ENCODE measurements at regions of chr17 and their contacts with region 1.

Region 1: DNA sequence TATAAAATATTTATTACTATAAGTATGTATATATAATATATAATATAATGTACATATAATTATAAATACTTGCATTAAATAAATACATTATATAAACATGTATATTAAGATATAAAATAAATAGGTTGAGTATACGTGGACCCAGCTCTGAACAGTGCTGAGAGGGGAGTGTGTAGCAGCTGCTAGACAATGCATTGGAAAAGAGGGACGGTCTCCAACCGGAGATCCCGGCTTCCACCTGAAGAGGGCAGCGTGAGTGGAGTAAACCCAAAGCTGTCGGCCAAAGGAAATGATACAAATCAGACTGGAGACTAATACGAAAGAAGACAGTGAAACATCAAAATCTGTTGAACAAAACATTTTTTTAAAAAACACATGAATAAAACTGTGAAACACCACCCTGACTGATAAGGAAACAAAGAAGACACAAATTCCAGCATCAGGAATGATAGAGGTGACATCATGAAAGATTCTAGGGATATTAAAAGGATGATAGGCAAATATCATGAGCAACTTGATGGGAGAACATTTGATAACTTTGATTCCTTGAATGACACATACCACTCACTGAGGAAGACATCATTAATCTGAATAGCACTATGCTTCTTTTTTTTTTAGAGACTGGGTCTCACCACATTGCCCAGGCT is 125.4 kb upstream of the CHMP6 start:
- DNase-seq: peak; percentile 34 to 73 (median 63)
- ATAC-seq: peak; percentile 65
- H3K4me3 ChIP-seq: no peak overlapping the region
- H3K4me3 Mint-ChIP-seq: no peak overlapping the region
- H3K27ac ChIP-seq: no peak overlapping the region
- H3K27ac Mint-ChIP-seq: peak overlapping the region; percentile 73
- H3K4me1 ChIP-seq: peaks cover 27% of the 10 kb centered on the region
- H3K4me1 Mint-ChIP-seq: peaks cover 48% of the 10 kb centered on the region
- H3K27me3 ChIP-seq: no peaks in the 10 kb centered on the region
- H3K27me3 Mint-ChIP-seq: no peaks in the 10 kb centered on the region
- CTCF ChIP-seq: peak; percentile 72

Region 2: DNA sequence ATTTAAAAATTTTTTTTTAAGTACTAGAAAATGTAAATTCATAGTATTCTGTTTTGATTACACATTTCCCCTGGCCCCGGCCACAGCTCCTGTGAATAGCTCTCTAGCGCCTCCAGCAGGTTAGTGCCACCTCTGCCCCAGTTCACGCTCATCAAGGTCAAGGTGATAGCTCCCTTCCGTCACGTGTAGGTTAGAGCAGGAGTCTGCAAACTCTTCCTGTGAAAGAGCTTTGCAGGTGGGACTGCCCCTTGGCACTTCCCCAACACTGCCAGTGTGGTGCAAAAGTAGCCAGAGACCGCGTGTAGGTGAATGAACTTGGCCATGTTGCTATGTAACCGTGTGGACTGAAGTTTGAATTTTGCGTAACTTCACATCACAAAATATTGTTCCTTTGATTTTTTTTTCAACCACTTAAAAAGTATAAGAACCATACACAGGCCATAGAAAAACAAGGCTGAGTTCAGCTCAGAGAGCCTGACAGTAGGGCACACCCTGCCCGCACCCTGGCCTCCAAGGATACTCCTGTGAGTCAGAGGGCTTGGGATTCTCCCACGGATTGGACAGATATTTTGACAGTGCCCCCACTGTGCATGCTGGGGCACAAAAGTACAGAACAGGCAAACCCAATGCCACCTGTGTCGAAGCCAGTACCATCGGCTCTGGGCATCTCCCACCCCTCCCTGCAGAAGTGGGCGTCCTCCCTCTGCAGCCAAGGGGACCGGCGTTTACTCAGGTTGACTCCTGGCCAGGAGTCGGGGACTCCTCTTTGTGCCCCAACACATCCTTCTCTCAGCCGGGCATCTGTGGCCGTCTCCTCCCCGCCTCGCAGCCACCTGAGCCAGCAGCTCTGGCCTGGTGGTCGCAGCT is 33.4 kb after region 1 on chr17:
- CTCF ChIA-PET with region 1: interaction called, 5 read pairs
- POLR2A ChIA-PET with region 1: no interaction called
- intact Hi-C with region 1: loop called (anchors 1 kb)
- DNase-seq: peak; percentile 58 to 84 (median 78)
- ATAC-seq: peak; percentile 88
- H3K4me3 ChIP-seq: no peak overlapping the region
- H3K4me3 Mint-ChIP-seq: no peak overlapping the region
- H3K27ac ChIP-seq: no peak overlapping the region
- H3K27ac Mint-ChIP-seq: no peak overlapping the region
- H3K4me1 ChIP-seq: peaks cover 5% of the 10 kb centered on the region
- H3K4me1 Mint-ChIP-seq: peaks cover 24% of the 10 kb centered on the region
- H3K27me3 ChIP-seq: no peaks in the 10 kb centered on the region
- H3K27me3 Mint-ChIP-seq: no peaks in the 10 kb centered on the region
- CTCF ChIP-seq: peak; percentile 97

Region 3: GRCh38 chr17:80970044-80970761 is 103.9 kb after region 1 on chr17:
- CTCF ChIA-PET with region 1: interaction called, 3 read pairs
- POLR2A ChIA-PET with region 1: no interaction called
- intact Hi-C with region 1: loop called in 1 of 2 experiments (anchors 10 kb)
- DNase-seq: peak in 7 of 9 experiments; percentile 18 to 68 (median 52)
- ATAC-seq: peak; percentile 70
- H3K4me3 ChIP-seq: no peak overlapping the region
- H3K4me3 Mint-ChIP-seq: no peak overlapping the region
- H3K27ac ChIP-seq: no peak overlapping the region
- H3K27ac Mint-ChIP-seq: no peak overlapping the region
- H3K4me1 ChIP-seq: peaks cover 19% of the 10 kb centered on the region
- H3K4me1 Mint-ChIP-seq: peaks cover 5% of the 10 kb centered on the region
- H3K27me3 ChIP-seq: no peaks in the 10 kb centered on the region
- H3K27me3 Mint-ChIP-seq: no peaks in the 10 kb centered on the region
- CTCF ChIP-seq: peak; percentile 26

Region 4: DNA sequence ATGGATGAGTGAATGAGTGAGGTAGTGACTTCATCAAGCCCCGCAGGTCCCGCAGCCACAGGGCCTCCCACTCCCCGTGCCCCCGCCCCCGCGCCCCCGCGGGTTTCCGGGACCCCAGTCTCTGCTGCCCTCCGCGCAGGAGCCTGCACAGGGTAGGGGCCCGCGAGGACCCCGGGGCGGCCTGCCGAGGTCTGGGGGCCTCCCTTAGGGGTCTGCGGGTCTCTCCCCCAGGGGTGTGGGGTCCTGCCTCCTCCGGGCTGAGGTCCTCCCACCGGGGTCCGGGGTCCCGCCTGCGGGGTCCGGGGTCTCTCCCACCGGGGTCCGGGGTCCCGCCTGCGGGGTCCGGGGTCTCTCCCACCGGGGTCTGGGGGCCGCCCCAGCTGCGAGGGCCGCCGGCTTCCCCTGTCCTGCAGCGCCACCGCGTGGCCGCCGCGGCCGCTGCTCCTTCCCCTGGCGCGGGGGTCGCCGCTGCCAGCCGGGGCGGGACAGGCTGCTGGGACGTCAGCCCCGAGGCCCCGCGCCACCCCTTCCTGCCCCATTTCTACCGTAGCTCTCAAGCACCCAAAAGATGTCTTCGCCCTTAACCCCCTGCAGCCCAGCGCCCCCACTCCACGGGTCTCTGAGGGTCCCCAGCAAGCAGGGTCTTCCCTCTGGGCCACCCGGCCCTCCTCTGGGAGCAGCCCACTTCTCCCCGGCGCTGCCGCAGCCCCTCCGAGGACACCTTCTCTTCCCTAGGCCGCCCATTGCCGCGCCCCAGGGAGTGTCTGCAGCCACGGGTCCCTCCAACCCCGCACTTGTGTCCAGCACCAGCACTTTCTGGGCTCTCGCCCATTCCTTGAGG is 115.0 kb after region 1 on chr17:
- CTCF ChIA-PET with region 1: interaction called, 3 read pairs
- POLR2A ChIA-PET with region 1: no interaction called
- intact Hi-C with region 1: loop called (anchors 5 to 10 kb)
- DNase-seq: peak in 6 of 9 experiments; percentile 25 to 66 (median 56)
- ATAC-seq: peak; percentile 74
- H3K4me3 ChIP-seq: no peak overlapping the region
- H3K4me3 Mint-ChIP-seq: no peak overlapping the region
- H3K27ac ChIP-seq: no peak overlapping the region
- H3K27ac Mint-ChIP-seq: no peak overlapping the region
- H3K4me1 ChIP-seq: peaks cover 6% of the 10 kb centered on the region
- H3K4me1 Mint-ChIP-seq: peaks cover 7% of the 10 kb centered on the region
- H3K27me3 ChIP-seq: peaks cover 2 to 5% of the 10 kb centered on the region in 2 experiments
- H3K27me3 Mint-ChIP-seq: peaks cover 23% of the 10 kb centered on the region
- CTCF ChIP-seq: peak; percentile 88

Measured in CD8-positive, alpha-beta T cell (primary cell).